OCI-LY7 (cell line): ENCODE measurements at regions of chr2 and their contacts with region 1.

Region 1: DNA sequence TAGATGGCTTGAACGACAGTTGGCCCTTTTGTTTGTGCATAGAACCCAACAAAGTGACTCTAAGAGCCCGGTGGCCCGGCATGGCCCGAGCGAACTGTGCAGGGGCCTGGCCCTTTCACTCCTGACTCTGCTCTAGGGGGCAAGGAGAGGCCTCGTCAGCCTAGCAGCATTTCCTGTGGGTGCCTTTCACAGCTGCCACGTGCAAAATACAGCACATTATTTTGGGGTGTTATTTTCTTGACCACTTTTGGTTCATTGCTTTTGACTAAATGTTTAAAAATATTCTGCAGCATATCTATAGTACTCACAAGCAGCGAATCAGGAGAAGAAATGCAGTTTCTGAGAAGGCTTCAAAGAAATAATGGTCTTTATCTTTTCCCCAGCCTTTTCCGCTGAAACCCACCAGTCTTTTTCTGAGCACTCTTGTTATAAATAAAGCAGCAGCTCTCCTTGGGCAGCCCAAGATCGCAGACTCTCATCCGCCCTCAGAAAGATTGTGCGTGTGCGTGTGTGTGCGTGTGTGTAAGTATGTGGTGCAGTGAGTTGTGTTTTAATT is 31.3 kb downstream of the DGKD start:
- DNase-seq: peak; percentile 72
- H3K4me3 ChIP-seq: peak overlapping the region; percentile 28
- H3K27ac ChIP-seq: peak overlapping the region; percentile 82
- H3K4me1 ChIP-seq: peaks cover 62% of the 10 kb centered on the region
- CTCF ChIP-seq: no peak

Region 2: GRCh38 chr2:233331536-233331935 is 54.0 kb before region 1 on chr2:
- CTCF ChIA-PET with region 1: no interaction called
- POLR2A ChIA-PET with region 1: no interaction called
- intact Hi-C with region 1: loop called (anchors 2 kb)
- DNase-seq: peak; percentile 93
- H3K4me3 ChIP-seq: peak overlapping the region; percentile 33
- H3K27ac ChIP-seq: peak overlapping the region; percentile 31
- H3K4me1 ChIP-seq: peaks cover 15% of the 10 kb centered on the region
- CTCF ChIP-seq: no peak

Region 3: DNA sequence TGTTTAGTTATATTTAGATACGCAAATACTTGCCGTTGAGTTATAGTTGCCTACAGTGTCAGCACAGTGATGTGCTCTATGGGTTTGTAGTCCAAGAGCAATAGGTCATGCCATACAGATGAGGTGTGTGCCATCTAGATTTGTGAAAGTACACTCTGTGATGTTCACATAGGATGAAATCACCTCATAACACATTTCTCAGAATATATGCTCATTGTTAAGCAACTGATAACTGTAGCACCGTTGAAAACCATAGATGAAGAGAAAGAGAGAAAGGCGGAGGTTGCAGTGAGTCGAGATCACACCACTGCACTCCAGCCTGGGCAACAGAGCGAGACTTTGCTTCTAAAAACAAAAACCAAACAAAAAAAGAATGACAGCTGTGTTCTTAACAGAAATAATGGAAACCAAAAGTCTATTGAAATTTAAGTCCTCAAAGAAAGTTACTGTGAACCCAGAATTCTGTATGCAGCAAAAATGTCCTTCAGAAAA is 21.8 kb before region 1 on chr2:
- CTCF ChIA-PET with region 1: interaction called, 3 read pairs
- POLR2A ChIA-PET with region 1: interaction called, 11 read pairs
- intact Hi-C with region 1: no loop called
- DNase-seq: peak; percentile 54
- H3K4me3 ChIP-seq: peak overlapping the region; percentile 36
- H3K27ac ChIP-seq: peak overlapping the region; percentile 90
- H3K4me1 ChIP-seq: peaks cover 89% of the 10 kb centered on the region
- CTCF ChIP-seq: no peak

Region 4: DNA sequence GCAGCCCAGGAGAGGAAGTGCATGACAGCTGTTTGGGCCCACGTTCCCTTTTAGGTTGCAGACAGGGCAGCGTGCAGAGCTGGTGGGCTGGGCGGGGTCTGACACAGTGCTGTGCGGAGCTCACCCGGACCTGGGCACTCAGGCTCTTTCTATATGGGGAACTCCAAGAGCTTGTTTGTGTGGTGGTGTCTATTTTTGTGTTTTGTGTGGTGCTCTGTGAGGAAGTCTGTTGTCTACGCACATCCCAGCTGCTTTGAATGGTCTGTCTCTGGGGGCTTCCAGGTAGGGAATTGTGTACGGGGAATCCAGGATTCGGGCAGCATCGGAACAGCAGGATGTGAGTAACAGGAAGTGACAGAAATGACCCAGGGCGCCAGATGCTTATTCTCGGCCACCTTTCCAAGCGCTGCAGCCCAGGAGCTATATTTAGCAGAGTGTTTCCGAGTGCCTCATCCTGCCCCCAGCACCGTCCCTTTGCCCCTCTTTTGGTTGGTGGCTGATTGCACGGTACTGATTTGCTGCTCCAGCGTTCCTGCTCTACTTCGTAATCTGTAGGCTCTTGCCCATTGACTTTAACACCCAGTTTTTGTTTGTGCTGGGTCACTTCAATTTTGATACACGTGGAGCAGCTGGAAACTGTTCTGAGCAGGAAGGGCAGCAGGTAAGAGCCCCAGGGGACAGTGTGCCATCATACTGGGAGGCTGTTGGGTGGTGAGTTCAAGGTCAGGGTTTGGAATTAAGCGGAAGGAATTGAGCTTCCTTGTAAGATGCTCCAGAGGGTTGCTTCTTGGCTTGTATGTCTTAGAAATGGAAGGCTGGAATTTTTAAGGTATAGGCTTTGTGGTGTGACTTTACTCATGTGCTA is 33.4 kb after region 1 on chr2:
- CTCF ChIA-PET with region 1: no interaction called
- POLR2A ChIA-PET with region 1: interaction called, 3 read pairs
- intact Hi-C with region 1: loop called (anchors 2 kb)
- DNase-seq: peak; percentile 85
- H3K4me3 ChIP-seq: peak overlapping the region; percentile 61
- H3K27ac ChIP-seq: peak overlapping the region; percentile 69
- H3K4me1 ChIP-seq: peaks cover 72% of the 10 kb centered on the region
- CTCF ChIP-seq: no peak